ENCODE measurements at regions of chrX and their contacts with region 1.

Region 1: GRCh38 chrX:111244235-111244750 is 26.0 kb downstream of the CAPN6 start:
- DNase-seq: no peak
- H3K4me3 Mint-ChIP-seq: no peak overlapping the region
- H3K27ac Mint-ChIP-seq: no peak overlapping the region
- H3K4me1 Mint-ChIP-seq: no peaks in the 10 kb centered on the region
- H3K27me3 Mint-ChIP-seq: no peaks in the 10 kb centered on the region
- CTCF ChIP-seq: no peak

Region 2: GRCh38 chrX:110450050-110450449 is 794.2 kb before region 1 on chrX:
- CTCF ChIA-PET with region 1: no interaction called
- intact Hi-C with region 1: loop called (anchors 5 kb)
- DNase-seq: peak; percentile 70
- H3K4me3 Mint-ChIP-seq: no peak overlapping the region
- H3K27ac Mint-ChIP-seq: no peak overlapping the region
- H3K4me1 Mint-ChIP-seq: no peaks in the 10 kb centered on the region
- H3K27me3 Mint-ChIP-seq: peaks cover 63% of the 10 kb centered on the region
- CTCF ChIP-seq: peak; percentile 39

Region 3: DNA sequence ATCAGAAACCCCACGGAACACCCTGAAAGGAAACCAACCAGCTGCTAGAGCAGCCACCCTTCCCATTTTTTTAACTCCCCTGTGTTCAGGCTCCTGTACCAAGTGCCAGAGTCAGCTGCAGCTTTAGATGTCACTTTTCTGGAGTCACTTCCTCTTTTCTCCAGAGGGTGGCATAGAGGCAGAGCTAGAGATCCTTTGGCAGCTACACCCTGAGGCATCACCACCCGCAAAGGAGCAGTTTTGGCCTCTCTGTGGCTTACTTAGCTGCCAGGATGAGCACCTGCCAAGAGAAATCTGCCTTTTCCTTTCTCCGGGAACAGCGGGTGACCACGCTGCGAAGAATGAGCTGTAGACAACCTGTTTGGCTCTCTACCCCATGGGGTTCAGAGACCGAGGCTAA is 390.7 kb before region 1 on chrX:
- CTCF ChIA-PET with region 1: interaction called, 10 read pairs
- intact Hi-C with region 1: loop called (anchors 2 kb)
- DNase-seq: peak; percentile 24
- H3K4me3 Mint-ChIP-seq: no peak overlapping the region
- H3K27ac Mint-ChIP-seq: no peak overlapping the region
- H3K4me1 Mint-ChIP-seq: no peaks in the 10 kb centered on the region
- H3K27me3 Mint-ChIP-seq: peaks cover 14% of the 10 kb centered on the region
- CTCF ChIP-seq: peak; percentile 16

Region 4: DNA sequence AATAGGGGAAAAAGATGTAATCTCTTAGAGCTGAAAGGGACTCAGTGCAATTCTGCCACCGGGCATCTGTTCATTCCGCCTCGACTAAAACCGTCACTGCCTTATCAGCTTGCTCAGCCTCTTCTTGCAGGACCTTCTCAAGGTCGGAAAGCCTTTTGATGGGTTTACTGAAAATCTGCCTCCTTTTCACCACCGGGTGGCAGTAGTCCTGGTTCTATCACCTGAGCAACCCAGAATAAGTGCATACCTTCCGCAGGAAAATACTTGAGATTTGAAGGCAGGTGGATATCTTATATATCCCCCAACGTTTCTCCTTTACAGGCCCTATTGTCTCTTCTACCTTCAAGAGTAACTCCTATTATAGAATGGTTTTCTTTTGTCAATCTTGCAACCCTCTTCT is 251.7 kb before region 1 on chrX:
- CTCF ChIA-PET with region 1: interaction called, 3 read pairs
- intact Hi-C with region 1: loop called (anchors 1 kb)
- DNase-seq: peak; percentile 28
- H3K4me3 Mint-ChIP-seq: no peak overlapping the region
- H3K27ac Mint-ChIP-seq: no peak overlapping the region
- H3K4me1 Mint-ChIP-seq: no peaks in the 10 kb centered on the region
- H3K27me3 Mint-ChIP-seq: peaks cover 37% of the 10 kb centered on the region
- CTCF ChIP-seq: peak; percentile 22

Region 5: GRCh38 chrX:111168314-111168713 is 76.0 kb before region 1 on chrX:
- CTCF ChIA-PET with region 1: no interaction called
- intact Hi-C with region 1: loop called (anchors 5 kb)
- DNase-seq: no peak
- H3K4me3 Mint-ChIP-seq: no peak overlapping the region
- H3K27ac Mint-ChIP-seq: no peak overlapping the region
- H3K4me1 Mint-ChIP-seq: no peaks in the 10 kb centered on the region
- H3K27me3 Mint-ChIP-seq: no peaks in the 10 kb centered on the region
- CTCF ChIP-seq: no peak

Region 6: GRCh38 chrX:111216293-111216801 is 27.9 kb before region 1 on chrX:
- CTCF ChIA-PET with region 1: no interaction called
- intact Hi-C with region 1: no loop called
- DNase-seq: no peak
- H3K4me3 Mint-ChIP-seq: no peak overlapping the region
- H3K27ac Mint-ChIP-seq: no peak overlapping the region
- H3K4me1 Mint-ChIP-seq: no peaks in the 10 kb centered on the region
- H3K27me3 Mint-ChIP-seq: peaks cover 2% of the 10 kb centered on the region
- CTCF ChIP-seq: no peak

Region 7: GRCh38 chrX:111262096-111262495 is 17.8 kb after region 1 on chrX:
- CTCF ChIA-PET with region 1: no interaction called
- intact Hi-C with region 1: no loop called
- DNase-seq: no peak
- H3K4me3 Mint-ChIP-seq: no peak overlapping the region
- H3K27ac Mint-ChIP-seq: no peak overlapping the region
- H3K4me1 Mint-ChIP-seq: no peaks in the 10 kb centered on the region
- H3K27me3 Mint-ChIP-seq: no peaks in the 10 kb centered on the region
- CTCF ChIP-seq: no peak

Region 8: GRCh38 chrX:111646515-111646914 is 402.2 kb after region 1 on chrX:
- CTCF ChIA-PET with region 1: no interaction called
- intact Hi-C with region 1: no loop called
- DNase-seq: no peak
- H3K4me3 Mint-ChIP-seq: no peak overlapping the region
- H3K27ac Mint-ChIP-seq: no peak overlapping the region
- H3K4me1 Mint-ChIP-seq: no peaks in the 10 kb centered on the region
- H3K27me3 Mint-ChIP-seq: no peaks in the 10 kb centered on the region
- CTCF ChIP-seq: no peak